ENCODE measurements at regions of chr9 and their contacts with region 1.

Region 1: GRCh38 chr9:13209498-13209897 is 70.0 kb downstream of the MPDZ start:
- DNase-seq: no peak
- ATAC-seq: no peak
- H3K4me3 ChIP-seq: no peak overlapping the region
- H3K27ac ChIP-seq: no peak overlapping the region
- H3K4me1 ChIP-seq: no peaks in the 10 kb centered on the region
- H3K27me3 ChIP-seq: no peaks in the 10 kb centered on the region
- CTCF ChIP-seq: no peak

Region 2: GRCh38 chr9:13128224-13128860 is 81.2 kb before region 1 on chr9:
- intact Hi-C with region 1: no loop called
- DNase-seq: peak in 1 of 4 donors; percentile 62
- ATAC-seq: no peak
- H3K4me3 ChIP-seq: no peak overlapping the region
- H3K27ac ChIP-seq: no peak overlapping the region
- H3K4me1 ChIP-seq: no peaks in the 10 kb centered on the region
- H3K27me3 ChIP-seq: no peaks in the 10 kb centered on the region
- CTCF ChIP-seq: no peak

Region 3: GRCh38 chr9:13279284-13280141 is 70.0 kb after region 1 on chr9 and contains the start of gene MPDZ:
- intact Hi-C with region 1: loop called in 1 of 2 experiments (anchors 10 kb)
- DNase-seq: peak; percentile 53 to 85 (median 84)
- ATAC-seq: peak; percentile 89
- H3K4me3 ChIP-seq: peak within 1 kb of the TSS; percentile 50 to 52
- H3K27ac ChIP-seq: peak within 1 kb of the TSS; percentile 80 to 90
- H3K4me1 ChIP-seq: peaks cover 0 to 7% of the 10 kb centered on the region in 2 donors
- H3K27me3 ChIP-seq: peaks cover 0 to 26% of the 10 kb centered on the region in 2 donors
- CTCF ChIP-seq: no peak
- polyA plus RNA-seq, gene MPDZ: 66.0 to 77.7 (median 71.7) TPM

Measured in left lung (tissue), 14 donors.